ENCODE measurements at regions of chrX and their contacts with region 1.

Region 1: GRCh38 chrX:40153335-40154249 is 55.8 kb upstream of the BCOR start:
- DNase-seq: peak; percentile 54 to 85
- H3K4me3 ChIP-seq: peak overlapping the region; percentile 47 to 52 (median 48)
- H3K27ac ChIP-seq: peak overlapping the region; percentile 78 to 87 (median 84)
- H3K4me1 ChIP-seq: peaks cover 0 to 69% (median 58%) of the 10 kb centered on the region in 4 donors
- H3K27me3 ChIP-seq: peaks cover 0 to 67% (median 14%) of the 10 kb centered on the region in 3 donors
- CTCF ChIP-seq: no peak
- EP300 ChIP-seq: no peak
- POLR2A ChIP-seq: peak in 1 of 4 donors; percentile 7

Region 2: DNA sequence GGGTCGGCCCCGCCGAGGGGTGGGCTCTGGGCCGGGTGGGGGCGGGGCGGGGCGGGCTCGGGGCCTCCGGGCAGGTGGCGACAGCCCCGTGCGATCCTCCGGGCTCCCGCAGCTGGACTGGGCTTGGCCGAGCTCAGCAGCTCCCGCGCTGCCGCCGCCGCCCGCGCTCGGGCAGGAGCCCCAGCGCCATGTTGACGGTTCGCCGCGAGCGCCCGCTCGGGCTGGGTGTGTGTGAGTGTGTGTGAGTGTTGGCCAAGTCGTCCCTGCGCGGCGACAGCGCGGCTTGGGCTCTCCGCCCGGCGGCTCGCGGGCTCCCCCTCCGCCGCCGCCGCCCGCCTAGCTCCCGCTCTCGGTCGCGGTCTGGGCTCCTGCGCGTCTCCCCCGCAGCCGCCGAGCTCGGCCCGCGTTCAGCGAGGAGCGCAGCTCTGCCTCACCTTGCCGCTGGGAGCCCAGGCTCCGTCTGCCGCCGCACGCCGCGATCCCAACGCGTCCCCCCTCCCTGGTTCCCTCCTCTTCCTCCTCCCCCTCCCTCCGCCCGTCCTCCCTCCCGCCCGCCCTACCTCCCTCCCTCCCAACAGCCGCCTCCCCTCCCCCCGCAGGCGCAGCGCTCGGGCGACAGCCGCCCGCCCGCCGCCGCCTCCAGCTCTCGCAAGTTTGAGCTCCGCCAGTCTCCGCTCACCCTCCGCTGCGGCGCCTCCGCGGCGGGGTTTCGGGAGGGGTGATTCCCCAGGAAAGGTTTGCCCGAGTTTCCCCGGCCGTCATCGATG is 55.9 kb before region 1 on chrX and contains the start of gene BCOR:
- intact Hi-C with region 1: loop called (anchors 10 kb)
- DNase-seq: peak; percentile 77 to 90
- H3K4me3 ChIP-seq: peak within 1 kb of the TSS; percentile 63 to 75 (median 70)
- H3K27ac ChIP-seq: peak within 1 kb of the TSS; percentile 88 to 95 (median 93)
- H3K4me1 ChIP-seq: peaks cover 9 to 77% (median 35%) of the 10 kb centered on the region in 4 donors
- H3K27me3 ChIP-seq: peaks cover 0 to 68% (median 11%) of the 10 kb centered on the region in 3 donors
- CTCF ChIP-seq: no peak
- EP300 ChIP-seq: no peak
- POLR2A ChIP-seq: peak in 1 of 4 donors; percentile 28
- total RNA-seq, gene BCOR: 11.0 to 45.5 (median 34.8) TPM